ENCODE measurements at regions of chr3 and their contacts with region 1.

Region 1: DNA sequence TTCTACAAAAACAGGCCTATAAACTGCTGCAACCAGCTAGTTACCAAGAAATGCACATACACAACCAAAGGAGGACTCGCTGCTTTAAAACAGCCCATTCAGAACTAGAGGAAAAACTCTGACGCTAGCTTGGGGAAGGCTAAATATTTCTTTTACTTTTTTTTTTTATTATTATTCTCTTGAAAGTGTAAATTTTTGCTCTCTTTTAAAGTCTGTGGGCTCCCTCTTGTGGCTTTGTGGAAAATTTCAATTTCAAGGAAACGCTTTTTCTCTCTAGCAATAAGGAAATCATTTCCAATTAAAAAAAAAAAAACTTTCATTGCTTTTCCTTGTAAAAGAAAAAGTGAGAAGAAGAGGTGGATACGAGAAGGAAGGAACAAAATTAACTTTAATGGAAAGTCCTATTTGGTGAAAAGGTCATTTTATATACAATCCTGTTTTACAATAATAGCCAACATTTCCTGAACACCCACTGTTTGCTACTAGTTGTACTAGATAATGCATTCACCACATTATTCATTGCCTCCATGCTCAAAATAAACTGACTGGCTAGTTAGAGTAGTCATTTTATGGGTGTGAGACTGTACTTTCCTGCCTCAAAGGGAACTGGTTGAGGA is 51.2 kb upstream of the SAMMSON start:
- DNase-seq: peak; percentile 9
- H3K4me3 ChIP-seq: no peak overlapping the region
- H3K27ac ChIP-seq: no peak overlapping the region
- H3K4me1 ChIP-seq: no peaks in the 10 kb centered on the region
- H3K27me3 ChIP-seq: no peaks in the 10 kb centered on the region
- CTCF ChIP-seq: peak; percentile 43 to 57

Region 2: GRCh38 chr3:69890084-69890483 is 58.3 kb before region 1 on chr3:
- CTCF ChIA-PET with region 1: no interaction called
- dilution Hi-C with region 1: no loop called
- in situ Hi-C with region 1: no loop called
- intact Hi-C with region 1: no loop called
- DNase-seq: peak; percentile 84
- H3K4me3 ChIP-seq: no peak overlapping the region
- H3K27ac ChIP-seq: no peak overlapping the region
- H3K4me1 ChIP-seq: peaks cover 9% of the 10 kb centered on the region
- H3K27me3 ChIP-seq: no peaks in the 10 kb centered on the region
- CTCF ChIP-seq: no peak

Region 3: GRCh38 chr3:69925506-69925905 is 22.8 kb before region 1 on chr3:
- CTCF ChIA-PET with region 1: no interaction called
- dilution Hi-C with region 1: no loop called
- in situ Hi-C with region 1: no loop called
- intact Hi-C with region 1: loop called (anchors 1 kb)
- DNase-seq: no peak
- H3K4me3 ChIP-seq: no peak overlapping the region
- H3K27ac ChIP-seq: no peak overlapping the region
- H3K4me1 ChIP-seq: no peaks in the 10 kb centered on the region
- H3K27me3 ChIP-seq: no peaks in the 10 kb centered on the region
- CTCF ChIP-seq: no peak

Region 4: GRCh38 chr3:70315021-70315420 is 366.7 kb after region 1 on chr3:
- CTCF ChIA-PET with region 1: no interaction called
- dilution Hi-C with region 1: no loop called
- in situ Hi-C with region 1: no loop called
- intact Hi-C with region 1: no loop called
- DNase-seq: no peak
- H3K4me3 ChIP-seq: no peak overlapping the region
- H3K27ac ChIP-seq: no peak overlapping the region
- H3K4me1 ChIP-seq: no peaks in the 10 kb centered on the region
- H3K27me3 ChIP-seq: peaks cover 2% of the 10 kb centered on the region
- CTCF ChIP-seq: no peak